ENCODE measurements at regions of chr2 and their contacts with region 1.

Region 1: GRCh38 chr2:223993621-223994232 is 36.5 kb downstream of the MRPL44 start:
- DNase-seq: peak in 40 of 42 donors; percentile 11 to 91 (median 72)

Region 2: GRCh38 chr2:224039941-224040440 is 46.3 kb after region 1 on chr2:
- intact Hi-C with region 1: loop called (anchors 2 kb)
- DNase-seq: peak in 2 of 42 donors; percentile 25 to 34

Region 3: DNA sequence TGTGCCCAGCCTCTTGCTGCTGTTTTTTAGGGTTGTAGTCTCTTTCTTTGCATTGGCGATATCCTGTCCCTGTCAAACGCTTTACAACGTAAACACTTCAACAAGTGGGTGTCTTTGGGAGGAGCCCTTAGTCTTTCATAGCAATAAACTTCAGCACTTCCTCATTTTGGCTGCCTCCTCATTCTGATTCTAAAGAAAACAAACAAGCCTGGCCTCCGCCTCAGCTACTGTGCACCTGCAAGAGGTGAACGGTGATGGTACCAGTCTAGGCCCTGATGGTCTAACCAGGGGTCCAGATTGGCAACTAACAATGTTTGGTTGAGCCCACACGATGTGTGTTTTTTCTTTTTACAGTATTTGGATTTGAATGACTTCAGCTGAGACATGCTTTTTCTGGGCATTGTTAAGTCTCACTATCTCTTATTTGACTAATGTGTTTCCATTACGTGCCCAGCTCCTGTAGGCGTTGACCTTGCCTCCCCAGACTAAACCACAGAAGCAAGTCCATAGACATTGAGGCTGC is 644.6 kb after region 1 on chr2:
- intact Hi-C with region 1: no loop called
- DNase-seq: no peak

Measured in head of caudate nucleus (tissue), 42 donors.